Naive thymus-derived CD4-positive, alpha-beta T cell (primary cell): ENCODE measurements at regions of chr3 and their contacts with region 1.

Region 1: DNA sequence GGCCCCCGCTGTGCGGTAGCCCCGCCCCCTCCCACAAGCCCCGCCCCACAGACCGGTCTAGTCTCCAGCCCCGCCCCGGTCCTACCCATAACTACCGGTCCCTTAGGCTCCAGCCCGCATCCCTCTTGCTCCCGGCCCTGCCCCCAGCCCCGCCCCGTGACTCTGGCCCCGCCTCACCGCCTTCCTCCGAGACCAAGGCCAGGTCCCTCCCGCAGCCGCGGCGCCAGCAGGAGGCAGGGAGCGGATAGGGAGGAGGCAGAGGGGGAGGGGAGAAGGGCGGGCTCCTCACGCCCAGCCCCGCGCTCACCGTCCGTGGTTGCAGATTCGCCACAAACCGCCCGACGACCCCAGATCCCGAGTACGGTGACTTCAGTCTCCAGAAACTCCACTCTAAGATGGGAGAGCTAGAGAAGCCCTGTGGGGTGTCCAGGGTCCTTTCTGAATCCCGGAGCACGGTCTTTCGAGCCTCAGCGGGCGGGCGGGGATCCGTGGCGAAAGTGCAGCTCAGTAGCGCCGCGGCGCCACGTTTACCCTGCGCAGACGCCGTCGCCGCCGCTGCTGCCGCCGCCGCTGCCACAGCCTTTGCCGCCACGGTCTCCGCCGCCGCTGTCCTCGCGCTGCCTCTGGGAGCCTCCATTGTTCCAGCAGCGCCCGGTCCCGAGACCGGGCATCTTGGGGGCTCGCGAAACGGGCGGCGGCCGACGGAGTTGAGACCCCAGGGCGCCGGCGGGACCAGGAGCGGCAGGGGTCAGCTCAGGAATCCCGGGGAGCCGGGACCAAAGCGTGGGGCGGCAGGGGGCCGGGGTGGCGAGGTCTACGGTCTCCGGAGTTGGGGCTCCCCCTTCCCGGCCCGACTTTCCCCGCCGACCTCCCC is at the start of gene BRPF1:
- DNase-seq: peak; percentile 91 to 99 (median 98)
- ATAC-seq: peak; percentile 96
- H3K4me3 ChIP-seq: peak within 1 kb of the TSS; percentile 85
- H3K4me3 Mint-ChIP-seq: peak within 1 kb of the TSS; percentile 91 to 98 (median 93)
- H3K27ac ChIP-seq: peak within 1 kb of the TSS; percentile 88
- H3K27ac Mint-ChIP-seq: peak within 1 kb of the TSS; percentile 86 to 97 (median 95)
- H3K4me1 ChIP-seq: peaks cover 22 to 32% of the 10 kb centered on the region in 2 donors
- H3K4me1 Mint-ChIP-seq: peaks cover 49 to 77% (median 72%) of the 10 kb centered on the region in 7 donors
- H3K27me3 ChIP-seq: no peaks in the 10 kb centered on the region
- H3K27me3 Mint-ChIP-seq: no peaks in the 10 kb centered on the region
- total RNA-seq, gene BRPF1: 32.0 to 42.4 (median 39.5) TPM

Region 2: GRCh38 chr3:9362731-9363530 is 368.5 kb before region 1 on chr3 and contains the start of gene THUMPD3:
- CTCF ChIA-PET with region 1: no interaction called
- POLR2A ChIA-PET with region 1: interaction called, 3 read pairs
- intact Hi-C with region 1: loop called in 1 of 2 experiments (anchors 1 kb)
- DNase-seq: peak; percentile 77 to 97 (median 85)
- ATAC-seq: peak; percentile 94
- H3K4me3 ChIP-seq: peak within 1 kb of the TSS; percentile 99
- H3K4me3 Mint-ChIP-seq: peak within 1 kb of the TSS; percentile 94 to 100 (median 98)
- H3K27ac ChIP-seq: peak within 1 kb of the TSS; percentile 85
- H3K27ac Mint-ChIP-seq: peak within 1 kb of the TSS; percentile 96 to 100 (median 98)
- H3K4me1 ChIP-seq: peaks cover 7 to 14% of the 10 kb centered on the region in 2 donors
- H3K4me1 Mint-ChIP-seq: peaks cover 0 to 44% (median 30%) of the 10 kb centered on the region in 7 donors
- H3K27me3 ChIP-seq: no peaks in the 10 kb centered on the region
- H3K27me3 Mint-ChIP-seq: peaks cover 0 to 3% (median 0%) of the 10 kb centered on the region in 5 donors
- total RNA-seq, gene THUMPD3: 39.4 to 54.8 (median 42.4) TPM

Region 3: DNA sequence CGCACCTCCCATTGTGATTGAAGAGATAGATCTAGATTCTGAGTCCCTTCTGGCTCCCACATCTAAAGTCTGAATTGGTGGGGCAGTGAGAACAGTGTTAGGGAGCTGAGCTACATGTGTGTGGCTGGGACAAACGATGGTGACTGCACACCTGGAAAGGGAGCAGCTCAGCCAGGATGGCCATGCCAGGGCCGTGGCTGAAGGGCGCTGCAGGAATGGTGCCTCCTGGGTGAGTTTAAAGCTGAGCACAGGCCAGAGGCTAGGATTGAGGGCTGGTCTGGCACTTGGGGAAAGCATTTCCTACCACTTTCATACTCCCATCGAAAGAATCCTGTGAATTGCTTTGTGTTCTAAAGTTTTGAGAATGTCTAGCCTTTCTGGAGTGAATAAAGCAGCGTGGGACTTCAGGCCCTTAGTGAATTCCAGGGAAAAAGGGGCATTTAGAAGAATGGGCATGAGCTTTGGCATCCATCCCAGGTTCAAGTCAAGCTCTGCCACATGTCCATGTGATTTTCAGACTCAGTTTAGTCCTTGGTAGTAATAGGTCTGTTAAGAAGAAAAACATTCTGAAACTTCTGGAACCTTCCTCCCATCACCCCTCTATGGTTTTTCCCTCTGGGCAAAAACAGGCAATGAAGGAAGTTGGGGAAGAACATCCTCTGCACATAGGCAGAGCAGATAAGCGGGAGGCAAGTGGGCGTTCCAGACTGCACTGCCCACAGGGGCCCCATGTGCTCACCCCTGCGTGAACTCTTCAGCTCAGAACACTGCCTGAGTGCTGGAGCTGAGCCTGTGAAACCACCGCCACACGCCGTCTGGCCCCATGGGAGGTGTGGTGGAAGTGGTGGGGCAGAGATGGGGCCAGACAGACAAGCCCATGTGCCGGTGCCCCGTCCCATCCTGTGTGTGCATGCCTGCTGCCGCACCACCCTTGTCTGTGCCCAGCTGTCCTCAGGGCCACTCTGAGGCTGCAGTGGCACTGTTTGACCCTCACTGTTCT is 40.7 kb before region 1 on chr3:
- CTCF ChIA-PET with region 1: no interaction called
- POLR2A ChIA-PET with region 1: no interaction called
- intact Hi-C with region 1: no loop called
- DNase-seq: no peak
- ATAC-seq: no peak
- H3K4me3 ChIP-seq: no peak overlapping the region
- H3K4me3 Mint-ChIP-seq: no peak overlapping the region
- H3K27ac ChIP-seq: no peak overlapping the region
- H3K27ac Mint-ChIP-seq: peak overlapping the region in 3 of 9 donors; percentile 19 to 70 (median 26)
- H3K4me1 ChIP-seq: no peaks in the 10 kb centered on the region
- H3K4me1 Mint-ChIP-seq: peaks cover 0 to 2% (median 0%) of the 10 kb centered on the region in 7 donors
- H3K27me3 ChIP-seq: no peaks in the 10 kb centered on the region
- H3K27me3 Mint-ChIP-seq: no peaks in the 10 kb centered on the region

Region 4: GRCh38 chr3:9704347-9705322 is 26.8 kb before region 1 on chr3:
- CTCF ChIA-PET with region 1: no interaction called
- POLR2A ChIA-PET with region 1: interaction called, 3 read pairs
- intact Hi-C with region 1: loop called in 1 of 2 experiments (anchors 2 kb)
- DNase-seq: peak in 1 of 9 donors; percentile 38
- ATAC-seq: peak; percentile 48
- H3K4me3 ChIP-seq: no peak overlapping the region
- H3K4me3 Mint-ChIP-seq: peak overlapping the region in 9 of 10 donors; percentile 16 to 77 (median 50)
- H3K27ac ChIP-seq: no peak overlapping the region
- H3K27ac Mint-ChIP-seq: peak overlapping the region in 1 of 9 donors; percentile 32
- H3K4me1 ChIP-seq: peaks cover 7 to 9% of the 10 kb centered on the region in 2 donors
- H3K4me1 Mint-ChIP-seq: peaks cover 5 to 21% (median 10%) of the 10 kb centered on the region in 7 donors
- H3K27me3 ChIP-seq: peaks cover 0 to 5% of the 10 kb centered on the region in 2 donors
- H3K27me3 Mint-ChIP-seq: peaks cover 13 to 44% (median 17%) of the 10 kb centered on the region in 5 donors

Region 5: GRCh38 chr3:9769426-9770275 is 38.2 kb after region 1 on chr3 and contains the start of gene CAMK1:
- CTCF ChIA-PET with region 1: no interaction called
- POLR2A ChIA-PET with region 1: interaction called, 3 read pairs
- intact Hi-C with region 1: loop called in 1 of 2 experiments (anchors 1 kb)
- DNase-seq: peak in 8 of 9 donors; percentile 31 to 82 (median 49)
- ATAC-seq: peak; percentile 90
- H3K4me3 ChIP-seq: peak within 1 kb of the TSS; percentile 49
- H3K4me3 Mint-ChIP-seq: peak within 1 kb of the TSS; percentile 34 to 87 (median 68)
- H3K27ac ChIP-seq: peak within 1 kb of the TSS; percentile 43
- H3K27ac Mint-ChIP-seq: peak within 1 kb of the TSS; percentile 24 to 87 (median 57)
- H3K4me1 ChIP-seq: peaks cover 8 to 13% of the 10 kb centered on the region in 2 donors
- H3K4me1 Mint-ChIP-seq: peaks cover 13 to 45% (median 24%) of the 10 kb centered on the region in 7 donors
- H3K27me3 ChIP-seq: no peaks in the 10 kb centered on the region
- H3K27me3 Mint-ChIP-seq: peaks cover 0 to 3% (median 0%) of the 10 kb centered on the region in 5 donors
- total RNA-seq, gene CAMK1: 2.1 to 36.3 (median 2.5) TPM

Region 6: DNA sequence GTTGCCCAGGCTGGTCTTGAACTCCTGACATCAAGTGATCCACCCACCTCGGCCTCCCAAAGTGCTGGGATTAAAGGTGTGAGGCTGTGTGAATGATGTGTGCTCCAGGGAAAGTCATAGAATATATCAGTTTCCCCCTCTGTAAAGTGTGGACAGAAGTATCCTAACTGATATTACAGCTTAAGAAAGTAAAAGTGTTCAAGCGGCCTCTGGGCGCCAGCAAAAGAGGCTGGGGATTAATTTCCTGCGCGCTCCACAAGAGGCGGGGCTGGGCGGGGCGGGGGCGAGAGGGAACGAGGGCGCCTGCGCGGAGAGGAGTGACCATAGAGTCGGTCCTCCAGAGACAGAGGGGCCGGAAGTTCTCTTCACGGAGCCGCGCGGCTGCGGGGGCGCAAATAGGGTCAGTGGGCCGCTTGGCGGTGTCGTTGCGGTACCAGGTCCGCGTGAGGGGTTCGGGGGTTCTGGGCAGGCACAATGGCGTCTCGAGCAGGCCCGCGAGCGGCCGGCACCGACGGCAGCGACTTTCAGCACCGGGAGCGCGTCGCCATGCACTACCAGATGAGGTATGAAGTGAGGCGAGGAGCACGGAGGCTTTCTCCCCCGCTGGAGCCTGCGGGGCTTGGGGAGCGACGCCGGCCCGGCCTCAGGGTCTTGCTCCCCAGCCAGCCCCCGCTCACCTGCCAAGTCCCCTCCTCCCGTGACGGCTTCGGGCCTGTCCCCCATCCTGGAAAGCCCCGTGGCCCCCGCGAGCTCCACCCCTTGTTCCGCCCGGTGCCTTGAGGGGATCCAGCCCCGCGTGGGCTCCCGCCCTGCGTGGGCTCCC is 159.0 kb after region 1 on chr3 and contains the start of gene JAGN1:
- CTCF ChIA-PET with region 1: no interaction called
- POLR2A ChIA-PET with region 1: interaction called, 4 read pairs
- intact Hi-C with region 1: loop called (anchors 1 kb)
- DNase-seq: peak; percentile 78 to 92 (median 88)
- ATAC-seq: peak; percentile 93
- H3K4me3 ChIP-seq: peak within 1 kb of the TSS; percentile 99
- H3K4me3 Mint-ChIP-seq: peak within 1 kb of the TSS; percentile 91 to 100 (median 97)
- H3K27ac ChIP-seq: peak within 1 kb of the TSS; percentile 100
- H3K27ac Mint-ChIP-seq: peak within 1 kb of the TSS; percentile 92 to 99 (median 99)
- H3K4me1 ChIP-seq: peaks cover 8 to 15% of the 10 kb centered on the region in 2 donors
- H3K4me1 Mint-ChIP-seq: peaks cover 25 to 48% (median 36%) of the 10 kb centered on the region in 7 donors
- H3K27me3 ChIP-seq: no peaks in the 10 kb centered on the region
- H3K27me3 Mint-ChIP-seq: peaks cover 0 to 2% (median 0%) of the 10 kb centered on the region in 5 donors
- total RNA-seq, gene JAGN1: 16.0 to 34.5 (median 28.1) TPM

Region 7: GRCh38 chr3:10115326-10116137 is 384.1 kb after region 1 on chr3 and contains the start of gene BRK1:
- CTCF ChIA-PET with region 1: no interaction called
- POLR2A ChIA-PET with region 1: no interaction called
- intact Hi-C with region 1: loop called (anchors 1 kb)
- DNase-seq: peak; percentile 73 to 94 (median 91)
- ATAC-seq: peak; percentile 99
- H3K4me3 ChIP-seq: peak within 1 kb of the TSS; percentile 83
- H3K4me3 Mint-ChIP-seq: peak within 1 kb of the TSS; percentile 91 to 100 (median 98)
- H3K27ac ChIP-seq: peak within 1 kb of the TSS; percentile 85
- H3K27ac Mint-ChIP-seq: peak within 1 kb of the TSS; percentile 92 to 99 (median 98)
- H3K4me1 ChIP-seq: peaks cover 11 to 13% of the 10 kb centered on the region in 2 donors
- H3K4me1 Mint-ChIP-seq: peaks cover 23 to 48% (median 40%) of the 10 kb centered on the region in 7 donors
- H3K27me3 ChIP-seq: no peaks in the 10 kb centered on the region
- H3K27me3 Mint-ChIP-seq: peaks cover 0 to 2% (median 0%) of the 10 kb centered on the region in 5 donors
- total RNA-seq, gene BRK1: 40.9 to 117 (median 65.8) TPM